ENCODE measurements at regions of chr7 and their contacts with region 1.

Region 1: GRCh38 chr7:112414855-112415490 is 35.3 kb upstream of the IFRD1 start:
- DNase-seq: no peak
- ATAC-seq: peak; percentile 63 to 85
- H3K4me3 ChIP-seq: no peak overlapping the region
- H3K27ac ChIP-seq: no peak overlapping the region
- H3K4me1 ChIP-seq: peaks cover 0 to 8% of the 10 kb centered on the region in 2 donors
- H3K27me3 ChIP-seq: no peaks in the 10 kb centered on the region
- CTCF ChIP-seq: peak; percentile 40 to 59 (median 48)
- POLR2A ChIP-seq: no peak

Region 2: DNA sequence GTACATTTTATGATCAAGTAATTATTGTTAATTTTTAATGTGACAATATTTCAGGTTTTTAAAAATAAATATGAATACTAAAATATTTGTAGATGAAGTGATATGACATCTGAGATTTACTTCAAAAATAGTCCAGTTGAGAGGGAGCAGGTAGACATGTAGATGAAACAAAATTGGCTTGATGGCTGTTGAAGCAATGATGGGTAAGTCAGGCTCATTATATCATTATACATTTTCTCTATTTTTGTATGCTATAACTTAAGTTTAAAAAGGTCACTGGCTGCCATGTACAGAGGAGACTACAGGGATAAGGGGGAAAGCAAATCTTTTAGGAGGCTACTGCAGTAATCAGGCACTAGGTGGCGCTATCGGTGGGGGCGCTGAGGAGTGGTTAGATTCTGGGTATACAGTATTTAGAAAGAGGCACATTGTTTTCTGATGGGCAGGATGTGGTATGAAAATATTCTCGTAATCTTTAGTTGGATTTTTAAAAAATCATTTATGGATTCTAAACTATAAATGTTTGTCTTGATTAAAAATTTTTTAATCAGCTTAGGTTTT is 662.9 kb before region 1 on chr7:
- in situ Hi-C with region 1: loop called in 1 of 4 experiments (anchors 25 kb)
- intact Hi-C with region 1: loop called (anchors 10 kb)
- DNase-seq: no peak
- ATAC-seq: peak in 1 of 2 donors; percentile 36
- H3K4me3 ChIP-seq: no peak overlapping the region
- H3K27ac ChIP-seq: no peak overlapping the region
- H3K4me1 ChIP-seq: no peaks in the 10 kb centered on the region
- H3K27me3 ChIP-seq: no peaks in the 10 kb centered on the region
- CTCF ChIP-seq: peak; percentile 36 to 67 (median 52)
- POLR2A ChIP-seq: no peak

Region 3: GRCh38 chr7:111763221-111763801 is 651.7 kb before region 1 on chr7:
- in situ Hi-C with region 1: loop called in 2 of 4 experiments (anchors 10 to 25 kb)
- intact Hi-C with region 1: loop called (anchors 10 kb)
- DNase-seq: no peak
- ATAC-seq: no peak
- H3K4me3 ChIP-seq: no peak overlapping the region
- H3K27ac ChIP-seq: no peak overlapping the region
- H3K4me1 ChIP-seq: no peaks in the 10 kb centered on the region
- H3K27me3 ChIP-seq: no peaks in the 10 kb centered on the region
- CTCF ChIP-seq: peak in 3 of 5 experiments; percentile 11 to 41 (median 39)
- POLR2A ChIP-seq: no peak

Region 4: GRCh38 chr7:111953611-111954010 is 461.4 kb before region 1 on chr7:
- in situ Hi-C with region 1: loop called in 3 of 4 experiments (anchors 25 kb)
- intact Hi-C with region 1: loop called (anchors 5 kb)
- DNase-seq: no peak
- ATAC-seq: peak; percentile 68 to 75
- H3K4me3 ChIP-seq: no peak overlapping the region
- H3K27ac ChIP-seq: no peak overlapping the region
- H3K4me1 ChIP-seq: peaks cover 0 to 13% of the 10 kb centered on the region in 2 donors
- H3K27me3 ChIP-seq: no peaks in the 10 kb centered on the region
- CTCF ChIP-seq: peak in 3 of 5 experiments; percentile 8 to 36 (median 15)
- POLR2A ChIP-seq: no peak

Region 5: DNA sequence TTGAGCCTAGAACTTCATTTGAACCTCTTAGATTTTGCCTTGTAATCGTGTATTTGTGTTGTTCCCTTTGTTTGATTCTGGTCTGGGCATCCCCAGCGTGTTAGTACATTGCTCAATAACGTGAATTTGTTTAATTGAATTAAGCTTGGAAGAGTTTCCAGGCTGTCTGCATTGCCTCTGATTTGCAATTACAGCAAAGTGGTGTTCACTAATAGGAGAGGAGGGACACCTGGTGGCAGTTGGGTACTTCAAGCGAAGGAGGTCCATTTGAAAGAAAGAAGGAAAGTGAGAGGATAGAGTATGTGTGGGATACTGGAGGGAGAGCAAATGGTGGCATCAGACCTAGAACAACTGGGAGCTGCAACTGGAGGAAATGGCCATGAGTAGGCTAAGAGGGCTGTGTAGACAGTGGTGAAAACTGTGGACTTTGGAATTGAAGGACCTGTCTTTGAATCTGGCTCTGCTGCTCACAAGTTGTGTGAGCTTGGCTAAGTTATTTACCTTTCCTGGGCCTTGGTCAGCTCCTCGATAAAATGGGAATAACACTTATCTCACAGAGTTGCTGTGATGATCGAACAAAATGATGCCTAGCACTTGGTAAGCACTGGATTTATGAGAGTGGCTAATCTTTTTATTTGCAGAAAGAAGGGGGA is 81.0 kb after region 1 on chr7:
- in situ Hi-C with region 1: no loop called
- intact Hi-C with region 1: loop called (anchors 5 kb)
- DNase-seq: peak; percentile 24 to 60
- ATAC-seq: peak; percentile 86 to 94
- H3K4me3 ChIP-seq: no peak overlapping the region
- H3K27ac ChIP-seq: no peak overlapping the region
- H3K4me1 ChIP-seq: peaks cover 0 to 4% of the 10 kb centered on the region in 2 donors
- H3K27me3 ChIP-seq: no peaks in the 10 kb centered on the region
- CTCF ChIP-seq: peak; percentile 60 to 79 (median 66)
- POLR2A ChIP-seq: no peak